Activated naive CD4-positive, alpha-beta T cell treated with anti-CD3 and anti-CD28 coated beads, Interleukin-2, amount 10 ng/mL, durations not matched to agents 7 days and 5 days (primary cell): ENCODE measurements at regions of chr10 and their contacts with region 1.

Region 1: DNA sequence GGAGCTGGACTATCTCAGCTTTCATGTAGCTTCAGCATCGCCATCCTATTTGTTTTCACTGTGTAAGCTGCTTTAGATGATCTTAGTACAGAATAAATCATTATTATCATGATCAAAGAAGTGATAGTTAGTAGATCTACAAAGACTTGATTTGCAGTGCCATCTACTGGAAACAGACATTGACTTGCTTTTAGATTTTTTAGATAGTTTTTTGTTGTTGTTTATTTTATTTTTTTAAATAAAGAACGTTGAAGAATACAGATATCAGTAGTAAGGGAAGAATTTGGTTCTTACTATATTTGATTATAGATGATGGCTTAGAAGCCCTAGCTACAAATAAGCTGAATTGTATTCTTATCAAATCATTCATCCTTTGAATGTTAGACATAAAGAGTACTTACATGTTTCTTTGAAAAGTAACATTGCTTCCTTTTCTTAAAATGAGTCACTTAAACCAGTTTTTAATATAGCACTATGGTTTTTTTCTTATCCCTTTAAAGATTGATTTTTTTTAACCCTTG is 6.3 kb upstream of the SFMBT2 start:
- DNase-seq: no peak
- H3K4me3 Mint-ChIP-seq: no peak overlapping the region
- H3K27ac Mint-ChIP-seq: no peak overlapping the region
- H3K4me1 Mint-ChIP-seq: peaks cover 29% of the 10 kb centered on the region
- H3K27me3 Mint-ChIP-seq: peaks cover 24% of the 10 kb centered on the region

Region 2: DNA sequence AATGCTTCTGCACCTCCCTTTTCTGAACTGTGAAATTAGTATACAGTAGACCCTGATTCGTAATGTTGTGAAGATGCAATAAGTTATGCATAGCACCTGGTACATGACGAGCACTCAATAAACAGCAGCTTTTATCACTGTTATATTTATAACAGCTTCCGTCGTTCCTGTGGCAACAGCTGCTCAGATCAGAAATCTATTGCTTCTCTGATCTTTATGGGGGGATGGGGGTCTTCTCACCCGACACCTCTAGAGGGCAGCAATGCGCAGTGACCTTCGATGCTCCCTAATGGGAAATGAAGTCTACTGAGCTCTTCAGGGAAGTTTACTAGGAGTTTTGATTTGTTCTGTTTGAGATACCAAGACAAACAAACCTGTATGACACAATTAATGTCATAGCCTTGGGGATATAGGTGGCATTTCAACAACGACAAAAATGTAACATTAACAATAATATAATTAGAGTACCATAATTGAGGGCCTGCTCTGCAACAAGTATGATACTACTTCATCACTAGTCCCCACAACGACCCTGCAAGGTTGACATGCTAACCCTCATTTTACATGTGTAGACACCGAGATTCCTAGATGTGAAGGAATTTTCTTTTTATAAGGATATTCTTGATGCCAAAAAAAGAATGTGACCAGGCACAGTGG is 295.9 kb before region 1 on chr10:
- CTCF ChIA-PET with region 1: interaction called, 17 read pairs
- DNase-seq: peak; percentile 83
- H3K4me3 Mint-ChIP-seq: no peak overlapping the region
- H3K27ac Mint-ChIP-seq: no peak overlapping the region
- H3K4me1 Mint-ChIP-seq: peaks cover 4% of the 10 kb centered on the region
- H3K27me3 Mint-ChIP-seq: peaks cover 35% of the 10 kb centered on the region

Region 3: GRCh38 chr10:7218968-7219367 is 198.2 kb before region 1 on chr10:
- CTCF ChIA-PET with region 1: no interaction called
- DNase-seq: no peak
- H3K4me3 Mint-ChIP-seq: no peak overlapping the region
- H3K27ac Mint-ChIP-seq: no peak overlapping the region
- H3K4me1 Mint-ChIP-seq: no peaks in the 10 kb centered on the region
- H3K27me3 Mint-ChIP-seq: no peaks in the 10 kb centered on the region

Region 4: GRCh38 chr10:7593063-7593462 is 175.9 kb after region 1 on chr10:
- CTCF ChIA-PET with region 1: no interaction called
- DNase-seq: no peak
- H3K4me3 Mint-ChIP-seq: no peak overlapping the region
- H3K27ac Mint-ChIP-seq: no peak overlapping the region
- H3K4me1 Mint-ChIP-seq: no peaks in the 10 kb centered on the region
- H3K27me3 Mint-ChIP-seq: peaks cover 17% of the 10 kb centered on the region